IMR-90 (cell line): ENCODE measurements at regions of chr19 and their contacts with region 1.

Region 1: GRCh38 chr19:35545001-35545911 is at the start of gene TMEM147:
- DNase-seq: peak; percentile 85
- ATAC-seq: peak; percentile 96
- H3K4me3 ChIP-seq: peak within 1 kb of the TSS; percentile 91
- H3K27ac ChIP-seq: peak within 1 kb of the TSS; percentile 90
- H3K4me1 ChIP-seq: peaks cover 8% of the 10 kb centered on the region
- H3K27me3 ChIP-seq: no peaks in the 10 kb centered on the region
- CTCF ChIP-seq: no peak
- POLR2A ChIP-seq: peak; percentile 90
- RAD21 ChIP-seq: no peak
- total RNA-seq, gene TMEM147: 59.2 and 67.6 TPM in 2 replicates

Region 2: DNA sequence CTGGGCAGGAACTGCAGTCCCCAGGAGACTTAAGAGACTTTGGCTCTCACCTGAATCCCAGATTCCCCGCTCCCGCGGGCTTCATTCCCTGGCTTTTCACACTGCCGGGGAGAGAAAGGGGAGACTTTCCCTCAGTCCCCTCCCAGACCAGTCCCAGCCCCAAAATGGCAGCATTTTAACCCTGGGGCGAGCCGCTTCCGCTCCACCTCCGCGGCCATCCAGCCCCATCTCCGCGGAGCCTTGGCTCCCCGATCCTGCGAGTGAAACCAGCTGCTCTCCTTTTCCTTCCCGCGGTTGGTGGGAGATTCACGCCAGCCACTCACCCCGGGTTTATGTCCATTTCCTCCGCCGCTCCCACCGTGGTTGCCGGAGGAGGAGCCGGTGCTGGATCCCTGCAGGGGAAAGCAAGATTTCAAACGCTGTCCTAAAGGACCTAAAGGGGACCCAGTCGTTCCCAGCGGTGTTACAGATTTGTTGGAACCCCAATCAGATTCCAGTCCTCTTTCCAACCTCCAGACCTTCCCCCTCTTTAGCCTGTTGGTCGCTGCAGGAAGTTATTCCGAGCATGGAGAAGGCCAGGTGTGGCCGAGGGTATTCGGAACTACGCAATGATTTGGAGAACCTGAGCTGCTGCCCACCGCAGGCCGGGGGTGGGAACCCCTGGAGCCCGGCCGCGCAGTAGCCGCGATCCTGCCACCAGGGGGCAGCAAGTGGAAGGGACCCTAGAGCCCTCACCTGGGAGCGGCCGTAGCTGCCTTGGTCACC is 35.2 kb before region 1 on chr19:
- CTCF ChIA-PET with region 1: no interaction called
- POLR2A ChIA-PET with region 1: no interaction called
- dilution Hi-C with region 1: no loop called
- in situ Hi-C with region 1: no loop called
- intact Hi-C with region 1: loop called (anchors 2 kb)
- DNase-seq: peak; percentile 22
- ATAC-seq: peak; percentile 71
- H3K4me3 ChIP-seq: peak overlapping the region; percentile 25
- H3K27ac ChIP-seq: no peak overlapping the region
- H3K4me1 ChIP-seq: peaks cover 5% of the 10 kb centered on the region; the same call in 1 of the 2 replicates
- H3K27me3 ChIP-seq: peaks cover 71% of the 10 kb centered on the region
- CTCF ChIP-seq: peak; percentile 78
- POLR2A ChIP-seq: no peak
- RAD21 ChIP-seq: peak; percentile 63

Region 3: DNA sequence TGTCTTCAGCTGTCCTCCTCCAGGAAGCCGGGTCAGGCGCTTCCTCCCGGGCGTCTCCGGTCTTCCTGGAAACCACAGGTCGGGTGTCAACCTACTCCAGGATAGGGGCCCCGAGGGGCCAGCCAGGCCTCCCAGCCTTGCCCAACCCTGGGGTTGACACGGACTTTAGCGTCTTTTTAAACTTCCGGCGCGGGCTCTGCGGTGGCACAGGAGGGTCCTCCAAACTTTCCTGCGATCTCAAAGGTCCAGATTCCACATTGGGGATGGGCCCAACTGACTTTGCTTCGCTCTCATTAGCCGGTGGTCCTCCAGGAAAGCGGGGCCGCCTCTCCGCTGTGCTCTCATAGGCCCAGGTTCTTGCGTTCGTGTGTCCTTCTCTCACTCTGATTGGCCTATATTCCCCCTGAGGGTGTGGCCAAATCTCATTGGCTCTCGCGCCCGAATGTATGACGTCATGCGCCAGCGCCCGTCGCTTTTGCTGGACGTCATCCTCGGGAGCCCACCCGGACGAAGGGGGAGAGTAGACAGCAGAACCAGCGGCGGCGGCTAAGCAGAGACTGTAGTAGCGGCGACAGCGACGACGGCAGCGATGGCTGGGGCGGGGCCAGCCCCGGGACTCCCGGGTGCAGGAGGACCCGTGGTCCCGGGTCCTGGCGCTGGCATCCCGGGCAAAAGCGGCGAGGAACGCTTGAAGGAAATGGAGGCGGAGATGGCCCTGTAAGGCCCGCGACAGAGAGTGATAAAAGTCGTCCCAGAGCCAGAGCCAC is 83.5 kb after region 1 on chr19 and contains the start of gene RBM42:
- CTCF ChIA-PET with region 1: no interaction called
- POLR2A ChIA-PET with region 1: no interaction called
- dilution Hi-C with region 1: no loop called
- in situ Hi-C with region 1: no loop called
- intact Hi-C with region 1: loop called (anchors 5 kb)
- DNase-seq: peak; percentile 99
- ATAC-seq: peak; percentile 100
- H3K4me3 ChIP-seq: peak within 1 kb of the TSS; percentile 65
- H3K27ac ChIP-seq: peak within 1 kb of the TSS; percentile 66
- H3K4me1 ChIP-seq: peaks cover 2% of the 10 kb centered on the region; the same call in 1 of the 2 replicates
- H3K27me3 ChIP-seq: no peaks in the 10 kb centered on the region
- CTCF ChIP-seq: no peak
- POLR2A ChIP-seq: peak; percentile 80; the same call in 1 of the 2 replicates
- RAD21 ChIP-seq: no peak
- total RNA-seq, gene RBM42: 19.0 and 20.6 TPM in 2 replicates

Region 4: DNA sequence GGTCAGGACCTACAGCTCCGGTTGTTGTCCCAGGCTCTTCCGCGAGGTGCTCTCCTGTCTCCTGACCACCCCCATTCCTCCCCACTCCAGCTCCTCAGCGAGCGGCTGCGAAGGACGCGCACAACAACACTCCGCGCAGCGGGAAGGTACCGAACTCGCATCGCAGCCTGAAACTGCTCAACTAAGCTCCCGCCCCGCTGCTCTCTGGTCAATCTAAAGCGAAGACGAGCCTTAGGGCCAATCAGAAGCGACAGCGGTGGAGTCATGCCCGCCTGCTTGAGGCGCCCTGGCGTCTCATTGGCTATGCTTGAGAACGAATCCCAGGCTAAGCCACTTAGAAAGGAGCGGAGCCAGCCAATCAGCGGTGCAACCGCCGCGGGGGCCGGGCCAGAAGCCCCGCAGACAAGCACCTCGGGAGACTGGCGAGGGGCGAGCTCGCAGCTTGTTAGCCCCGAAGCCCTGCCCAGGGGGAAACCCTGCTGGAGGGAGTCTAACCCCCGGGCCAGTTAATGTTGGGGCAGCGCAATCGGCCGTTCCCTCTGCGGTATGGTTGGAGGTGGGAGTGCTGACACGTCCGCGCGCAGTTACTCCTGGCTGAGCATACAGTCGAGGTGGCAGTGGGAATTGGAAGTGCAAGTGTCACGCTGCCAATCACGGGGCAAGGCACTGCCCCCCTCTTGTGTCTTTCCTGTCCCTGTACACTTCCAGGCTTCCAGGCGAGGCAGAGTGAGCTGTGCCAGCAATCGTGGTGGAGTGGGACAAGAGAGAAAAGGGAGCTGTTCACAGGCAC is 157.2 kb after region 1 on chr19:
- CTCF ChIA-PET with region 1: no interaction called
- POLR2A ChIA-PET with region 1: no interaction called
- dilution Hi-C with region 1: no loop called
- in situ Hi-C with region 1: no loop called
- intact Hi-C with region 1: loop called (anchors 5 kb)
- DNase-seq: peak; percentile 97
- ATAC-seq: peak; percentile 100
- H3K4me3 ChIP-seq: peak overlapping the region; percentile 49
- H3K27ac ChIP-seq: no peak overlapping the region
- H3K4me1 ChIP-seq: no peaks in the 10 kb centered on the region
- H3K27me3 ChIP-seq: no peaks in the 10 kb centered on the region
- CTCF ChIP-seq: no peak
- POLR2A ChIP-seq: no peak
- RAD21 ChIP-seq: no peak

Region 5: GRCh38 chr19:35783469-35784434 is 238.5 kb after region 1 on chr19:
- CTCF ChIA-PET with region 1: no interaction called
- POLR2A ChIA-PET with region 1: no interaction called
- dilution Hi-C with region 1: no loop called
- in situ Hi-C with region 1: no loop called
- intact Hi-C with region 1: no loop called
- DNase-seq: no peak
- ATAC-seq: no peak
- H3K4me3 ChIP-seq: no peak overlapping the region
- H3K27ac ChIP-seq: no peak overlapping the region
- H3K4me1 ChIP-seq: no peaks in the 10 kb centered on the region
- H3K27me3 ChIP-seq: no peaks in the 10 kb centered on the region
- CTCF ChIP-seq: no peak
- POLR2A ChIP-seq: no peak
- RAD21 ChIP-seq: no peak